HepG2 (cell line): ENCODE measurements at regions of chr6 and their contacts with region 1.

Region 1: GRCh38 chr6:97394160-97394748 is 111.2 kb upstream of the MMS22L start:
- DNase-seq: peak; percentile 65
- ATAC-seq: peak; percentile 61
- H3K4me3 ChIP-seq: no peak overlapping the region
- H3K27ac ChIP-seq: no peak overlapping the region
- H3K4me1 ChIP-seq: no peaks in the 10 kb centered on the region
- H3K27me3 ChIP-seq: no peaks in the 10 kb centered on the region
- CTCF ChIP-seq: peak; percentile 85
- EP300 ChIP-seq: no peak
- POLR2A ChIP-seq: no peak
- RAD21 ChIP-seq: peak; percentile 68

Region 2: DNA sequence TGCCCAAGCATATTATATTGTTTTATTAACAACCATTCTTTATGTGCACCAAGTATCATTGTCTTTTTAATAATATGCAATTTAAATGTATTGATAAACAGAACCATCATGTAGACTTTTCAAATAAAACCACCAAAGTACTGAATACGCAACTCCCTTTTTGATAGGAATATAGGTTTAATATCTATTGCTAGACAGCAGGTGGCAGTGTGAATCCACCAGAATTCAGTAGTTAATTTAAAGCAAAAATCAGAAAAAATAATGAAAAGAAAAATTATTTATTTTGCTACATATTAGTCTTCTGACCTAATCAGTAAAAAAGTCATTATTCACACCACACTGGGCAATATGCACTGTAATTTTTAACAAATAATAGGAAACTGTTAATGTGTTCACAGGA is 326.0 kb before region 1 on chr6:
- CTCF ChIA-PET with region 1: interaction called, 10 read pairs
- POLR2A ChIA-PET with region 1: no interaction called
- in situ Hi-C with region 1: loop called (anchors 5 kb)
- intact Hi-C with region 1: loop called (anchors 1 kb)
- DNase-seq: peak; percentile 3
- ATAC-seq: no peak
- H3K4me3 ChIP-seq: no peak overlapping the region
- H3K27ac ChIP-seq: no peak overlapping the region
- H3K4me1 ChIP-seq: no peaks in the 10 kb centered on the region
- H3K27me3 ChIP-seq: no peaks in the 10 kb centered on the region
- CTCF ChIP-seq: peak; percentile 39
- EP300 ChIP-seq: no peak
- POLR2A ChIP-seq: no peak
- RAD21 ChIP-seq: no peak

Region 3: DNA sequence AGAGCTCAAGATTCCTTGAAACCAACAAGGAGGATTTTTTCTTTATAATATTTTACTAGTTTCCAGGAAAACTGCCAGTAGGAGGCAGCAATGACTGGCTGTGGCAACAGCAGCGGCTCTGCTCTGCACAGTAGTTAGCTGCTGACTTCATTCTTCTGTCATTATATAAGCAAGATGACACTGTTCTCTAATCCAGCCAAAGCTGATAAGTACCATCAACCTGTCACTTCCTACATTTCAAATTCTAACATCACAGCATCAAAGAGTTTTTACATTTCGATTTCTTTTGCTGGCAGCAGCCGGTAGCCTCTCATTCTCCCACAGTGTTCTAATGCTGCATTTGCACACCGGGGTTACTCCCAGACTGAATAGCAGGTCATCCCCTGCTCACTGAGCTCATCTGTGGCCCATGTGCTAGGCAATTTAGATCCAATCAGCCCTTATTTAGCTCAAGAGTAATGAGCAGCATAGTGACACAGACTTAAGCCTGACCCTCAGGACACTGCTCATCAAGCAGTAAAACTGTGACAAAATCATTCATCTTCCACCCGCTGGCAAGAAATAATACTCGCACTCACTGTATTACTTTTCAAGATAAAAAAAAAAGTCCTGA is 179.0 kb before region 1 on chr6:
- CTCF ChIA-PET with region 1: interaction called, 20 read pairs
- POLR2A ChIA-PET with region 1: no interaction called
- in situ Hi-C with region 1: no loop called
- intact Hi-C with region 1: loop called (anchors 1 kb)
- DNase-seq: peak; percentile 26
- ATAC-seq: peak; percentile 91
- H3K4me3 ChIP-seq: no peak overlapping the region
- H3K27ac ChIP-seq: no peak overlapping the region
- H3K4me1 ChIP-seq: no peaks in the 10 kb centered on the region
- H3K27me3 ChIP-seq: no peaks in the 10 kb centered on the region
- CTCF ChIP-seq: peak; percentile 52
- EP300 ChIP-seq: no peak
- POLR2A ChIP-seq: no peak
- RAD21 ChIP-seq: no peak

Region 4: DNA sequence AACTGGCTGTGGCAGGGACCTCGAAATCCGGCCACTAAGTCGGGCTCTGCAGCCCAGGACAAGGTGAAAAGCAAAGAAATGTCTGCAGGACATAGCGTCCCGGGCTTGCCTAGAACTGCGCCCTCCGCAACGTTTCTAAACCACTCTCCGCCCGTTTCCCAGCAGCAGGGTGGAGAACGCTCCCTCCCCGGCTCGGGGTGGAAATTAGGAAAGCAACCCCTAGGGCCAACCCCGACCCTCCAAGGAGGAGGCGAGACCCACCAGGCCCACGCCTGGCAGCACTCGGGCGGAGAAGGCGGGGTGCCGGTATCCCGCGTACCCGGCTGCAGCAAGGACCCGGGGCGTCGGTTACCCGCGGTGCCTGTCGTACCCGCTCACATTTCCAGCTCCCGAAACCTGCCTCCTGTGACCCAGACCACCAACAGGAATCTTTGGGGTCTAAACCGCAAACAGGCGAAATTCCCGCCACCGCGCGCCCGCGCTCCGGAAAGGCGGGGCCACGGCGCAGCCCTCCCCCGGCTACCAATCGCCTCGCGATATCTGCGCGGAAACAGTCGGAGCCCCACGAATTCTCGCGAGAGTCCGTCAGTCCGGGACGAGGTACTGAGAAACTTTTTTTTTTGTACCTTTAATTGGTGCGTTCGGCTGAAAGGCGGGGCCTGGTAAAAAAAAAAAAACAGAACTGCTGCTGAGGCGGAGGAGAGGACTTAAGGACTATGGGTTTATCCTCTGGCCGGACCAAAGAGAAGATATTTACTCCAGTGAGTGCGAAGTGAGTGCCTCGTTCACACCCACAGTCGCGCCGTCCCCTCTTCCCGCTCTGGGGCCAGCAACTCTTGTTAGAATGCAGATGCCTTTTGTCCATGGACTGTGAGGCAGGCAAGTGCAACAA is 111.3 kb before region 1 on chr6 and contains the start of gene MMS22L:
- CTCF ChIA-PET with region 1: no interaction called
- POLR2A ChIA-PET with region 1: no interaction called
- in situ Hi-C with region 1: no loop called
- intact Hi-C with region 1: loop called (anchors 5 kb)
- DNase-seq: peak; percentile 92
- ATAC-seq: peak; percentile 97
- H3K4me3 ChIP-seq: peak within 1 kb of the TSS; percentile 77 to 96 (median 91)
- H3K27ac ChIP-seq: peak within 1 kb of the TSS; percentile 76
- H3K4me1 ChIP-seq: peaks cover 16% of the 10 kb centered on the region
- H3K27me3 ChIP-seq: no peaks in the 10 kb centered on the region; a peak in 1 of 5 replicates
- CTCF ChIP-seq: no peak
- EP300 ChIP-seq: no peak
- POLR2A ChIP-seq: peak; percentile 36 to 65; a peak in 3 of 4 replicates
- RAD21 ChIP-seq: 0 out of 2 replicates have a peak, but pooled peaks have one; percentile 5
- total RNA-seq, gene MMS22L: 32.9 and 51.8 TPM in 2 replicates